Activated CD8-positive, alpha-beta T cell treated with anti-CD3 and anti-CD28 coated beads for 36 hours (primary cell): ENCODE measurements at regions of chr3 and their contacts with region 1.

Region 1: GRCh38 chr3:69161587-69162307 is 39.4 kb upstream of the LMOD3 start:
- DNase-seq: peak; percentile 41
- ATAC-seq: peak; percentile 83
- H3K4me3 Mint-ChIP-seq: no peak overlapping the region
- H3K27ac Mint-ChIP-seq: no peak overlapping the region
- H3K4me1 Mint-ChIP-seq: peaks cover 18% of the 10 kb centered on the region
- H3K27me3 Mint-ChIP-seq: no peaks in the 10 kb centered on the region
- CTCF ChIP-seq: peak; percentile 94

Region 2: DNA sequence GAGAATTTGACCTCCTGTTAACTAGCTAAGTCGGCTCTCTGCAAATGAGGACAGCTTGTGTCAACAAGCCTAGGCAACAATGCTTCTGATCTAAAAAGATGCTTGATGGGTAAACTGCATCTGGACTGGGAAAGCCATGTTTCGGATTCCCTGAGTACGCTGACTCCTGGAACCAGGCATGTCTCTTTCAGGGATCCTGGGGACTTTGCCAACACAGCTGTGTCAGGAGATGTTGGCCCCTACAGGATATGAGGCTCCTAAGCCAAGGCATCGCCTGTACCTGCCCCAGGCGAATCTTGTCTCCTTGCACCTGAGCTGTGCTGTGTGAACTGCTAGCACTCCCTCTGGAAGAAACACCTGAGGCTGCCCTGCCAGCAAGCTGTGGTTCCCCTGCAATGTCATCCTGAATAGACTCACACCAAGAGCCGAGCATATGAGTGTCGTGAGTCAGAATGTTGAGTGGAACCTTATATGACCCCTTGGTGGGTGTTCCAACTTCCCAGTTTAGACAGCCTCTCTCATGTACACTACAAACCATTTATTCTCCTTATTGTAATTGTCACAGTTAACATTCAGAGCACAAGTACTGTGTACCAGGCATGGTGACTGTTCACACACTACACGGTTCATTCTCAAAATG is 165.3 kb before region 1 on chr3:
- CTCF ChIA-PET with region 1: no interaction called
- POLR2A ChIA-PET with region 1: no interaction called
- intact Hi-C with region 1: no loop called
- DNase-seq: no peak
- ATAC-seq: no peak
- H3K4me3 Mint-ChIP-seq: no peak overlapping the region
- H3K27ac Mint-ChIP-seq: peak overlapping the region; percentile 6
- H3K4me1 Mint-ChIP-seq: peaks cover 6% of the 10 kb centered on the region
- H3K27me3 Mint-ChIP-seq: no peaks in the 10 kb centered on the region
- CTCF ChIP-seq: no peak

Region 3: DNA sequence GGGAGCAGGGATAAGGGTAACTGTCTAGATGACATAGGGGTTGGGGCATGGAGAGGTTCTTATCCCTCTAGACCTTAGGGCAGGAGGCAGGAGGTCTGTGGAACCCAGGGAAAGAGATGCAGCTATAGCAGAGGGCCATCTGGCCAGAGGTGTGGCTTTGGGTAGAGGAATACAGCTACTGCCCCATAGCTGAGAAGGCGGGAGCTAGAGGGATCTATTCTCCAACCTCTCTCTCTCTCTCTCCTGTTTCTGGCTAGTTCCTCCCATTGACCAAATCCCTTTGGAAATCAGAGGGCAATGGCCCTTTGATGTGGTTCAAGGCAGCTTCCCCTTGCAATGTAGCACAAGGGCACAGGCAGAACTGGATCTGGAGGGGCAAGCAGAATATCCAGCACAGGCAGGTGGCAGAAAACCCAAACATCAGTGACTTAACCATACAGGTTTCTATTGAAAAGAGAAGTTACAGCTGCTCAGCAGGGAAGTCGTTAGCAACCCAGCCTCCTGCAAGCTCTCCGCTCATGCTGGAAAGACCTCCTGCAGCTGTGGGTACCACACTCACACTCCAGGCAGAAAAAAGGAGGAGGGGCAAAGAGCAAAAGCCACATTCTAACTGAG is 17.0 kb before region 1 on chr3:
- CTCF ChIA-PET with region 1: interaction called, 12 read pairs
- POLR2A ChIA-PET with region 1: no interaction called
- intact Hi-C with region 1: no loop called
- DNase-seq: no peak
- ATAC-seq: no peak
- H3K4me3 Mint-ChIP-seq: no peak overlapping the region
- H3K27ac Mint-ChIP-seq: no peak overlapping the region
- H3K4me1 Mint-ChIP-seq: no peaks in the 10 kb centered on the region
- H3K27me3 Mint-ChIP-seq: peaks cover 4% of the 10 kb centered on the region
- CTCF ChIP-seq: no peak

Region 4: DNA sequence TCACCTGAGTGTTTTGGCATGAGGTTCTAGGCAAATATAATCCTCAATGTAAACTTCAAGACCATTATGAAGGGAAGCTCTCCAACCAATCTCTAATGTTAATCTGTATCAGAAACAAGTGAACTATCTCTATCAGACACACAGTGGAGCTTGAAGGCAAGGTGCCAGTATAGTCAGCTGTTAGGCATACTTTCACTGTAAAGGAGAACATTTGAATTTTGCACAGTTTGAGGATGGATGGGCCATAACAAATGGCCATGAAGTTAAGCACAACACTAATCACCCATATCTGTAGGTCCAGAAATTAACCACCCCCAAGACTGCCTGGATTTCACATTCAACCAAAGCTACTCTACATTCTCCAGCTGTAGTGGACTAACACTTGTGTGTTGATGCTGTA is 29.8 kb after region 1 on chr3:
- CTCF ChIA-PET with region 1: interaction called, 24 read pairs
- POLR2A ChIA-PET with region 1: interaction called, 3 read pairs
- intact Hi-C with region 1: loop called (anchors 5 kb)
- DNase-seq: no peak
- ATAC-seq: no peak
- H3K4me3 Mint-ChIP-seq: no peak overlapping the region
- H3K27ac Mint-ChIP-seq: no peak overlapping the region
- H3K4me1 Mint-ChIP-seq: peaks cover 10% of the 10 kb centered on the region
- H3K27me3 Mint-ChIP-seq: no peaks in the 10 kb centered on the region
- CTCF ChIP-seq: no peak

Region 5: DNA sequence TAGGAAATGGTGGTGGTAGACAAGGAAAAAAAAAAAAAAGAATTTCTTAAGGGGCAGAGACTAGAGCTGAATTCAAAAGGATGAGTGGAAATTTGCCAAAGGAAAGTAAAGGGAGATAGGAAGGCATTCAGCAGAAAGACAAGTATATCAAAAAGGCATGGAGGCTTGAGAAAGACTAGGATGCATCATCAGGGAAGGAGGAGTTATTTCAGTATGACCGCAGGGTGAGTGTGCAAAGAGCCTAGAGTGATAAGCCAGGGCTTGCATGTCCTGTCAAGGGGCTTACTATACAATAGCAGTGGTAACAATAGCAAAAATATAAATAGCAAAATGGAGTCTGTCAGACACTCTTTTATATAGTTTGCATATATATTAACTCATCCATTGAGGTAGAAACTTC is 112.1 kb after region 1 on chr3:
- CTCF ChIA-PET with region 1: interaction called, 11 read pairs
- POLR2A ChIA-PET with region 1: interaction called, 3 read pairs
- intact Hi-C with region 1: no loop called
- DNase-seq: no peak
- ATAC-seq: no peak
- H3K4me3 Mint-ChIP-seq: no peak overlapping the region
- H3K27ac Mint-ChIP-seq: no peak overlapping the region
- H3K4me1 Mint-ChIP-seq: no peaks in the 10 kb centered on the region
- H3K27me3 Mint-ChIP-seq: no peaks in the 10 kb centered on the region
- CTCF ChIP-seq: no peak

Region 6: GRCh38 chr3:69299361-69299760 is 137.6 kb after region 1 on chr3:
- CTCF ChIA-PET with region 1: interaction called, 404 read pairs
- POLR2A ChIA-PET with region 1: interaction called, 3 read pairs
- intact Hi-C with region 1: no loop called
- DNase-seq: no peak
- ATAC-seq: no peak
- H3K4me3 Mint-ChIP-seq: no peak overlapping the region
- H3K27ac Mint-ChIP-seq: no peak overlapping the region
- H3K4me1 Mint-ChIP-seq: peaks cover 2% of the 10 kb centered on the region
- H3K27me3 Mint-ChIP-seq: no peaks in the 10 kb centered on the region
- CTCF ChIP-seq: no peak

Region 7: DNA sequence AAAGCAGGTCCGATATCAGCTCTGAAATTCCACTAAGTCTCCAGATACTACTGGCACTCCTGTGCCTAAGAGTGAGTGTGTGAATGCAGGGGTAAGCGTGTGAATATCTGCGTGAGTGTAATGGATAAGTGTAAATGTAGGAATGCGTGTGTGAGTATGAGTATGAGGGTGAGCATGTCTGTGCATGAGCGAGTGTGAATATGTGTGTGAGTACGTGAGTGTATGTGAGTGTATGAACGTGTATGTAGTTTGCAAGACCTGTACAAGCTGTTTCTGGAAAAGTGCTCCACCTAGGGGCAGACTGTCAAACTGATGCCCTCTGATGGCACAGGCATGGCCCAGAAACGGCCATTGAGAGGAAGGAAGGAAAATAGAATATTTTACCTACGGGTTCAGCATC is 248.5 kb after region 1 on chr3:
- CTCF ChIA-PET with region 1: interaction called, 41 read pairs
- POLR2A ChIA-PET with region 1: no interaction called
- intact Hi-C with region 1: no loop called
- DNase-seq: peak; percentile 86
- ATAC-seq: peak; percentile 97
- H3K4me3 Mint-ChIP-seq: no peak overlapping the region
- H3K27ac Mint-ChIP-seq: no peak overlapping the region
- H3K4me1 Mint-ChIP-seq: peaks cover 5% of the 10 kb centered on the region
- H3K27me3 Mint-ChIP-seq: peaks cover 6% of the 10 kb centered on the region
- CTCF ChIP-seq: peak; percentile 95